Naive thymus-derived CD4-positive, alpha-beta T cell (primary cell): ENCODE measurements at regions of chr12 and their contacts with region 1.

Region 1: GRCh38 chr12:96906849-96907670 is at the start of gene NEDD1:
- DNase-seq: peak; percentile 70 to 89 (median 81)
- ATAC-seq: peak; percentile 90
- H3K4me3 ChIP-seq: peak within 1 kb of the TSS; percentile 84
- H3K4me3 Mint-ChIP-seq: peak within 1 kb of the TSS; percentile 89 to 97 (median 95)
- H3K27ac ChIP-seq: peak within 1 kb of the TSS; percentile 99
- H3K27ac Mint-ChIP-seq: peak within 1 kb of the TSS; percentile 96 to 99 (median 98)
- H3K4me1 ChIP-seq: peaks cover 0 to 12% of the 10 kb centered on the region in 2 donors
- H3K4me1 Mint-ChIP-seq: peaks cover 21 to 53% (median 47%) of the 10 kb centered on the region in 7 donors
- H3K27me3 ChIP-seq: no peaks in the 10 kb centered on the region
- H3K27me3 Mint-ChIP-seq: peaks cover 0 to 12% (median 0%) of the 10 kb centered on the region in 5 donors
- total RNA-seq, gene NEDD1: 18.3 to 52.4 (median 23.2) TPM

Region 2: GRCh38 chr12:95316798-95317197 is 1590.3 kb before region 1 on chr12:
- CTCF ChIA-PET with region 1: no interaction called
- POLR2A ChIA-PET with region 1: no interaction called
- intact Hi-C with region 1: no loop called
- DNase-seq: no peak
- ATAC-seq: no peak
- H3K4me3 ChIP-seq: no peak overlapping the region
- H3K4me3 Mint-ChIP-seq: no peak overlapping the region
- H3K27ac ChIP-seq: no peak overlapping the region
- H3K27ac Mint-ChIP-seq: no peak overlapping the region
- H3K4me1 ChIP-seq: no peaks in the 10 kb centered on the region
- H3K4me1 Mint-ChIP-seq: peaks cover 0 to 1% (median 0%) of the 10 kb centered on the region in 7 donors
- H3K27me3 ChIP-seq: peaks cover 0 to 2% of the 10 kb centered on the region in 2 donors
- H3K27me3 Mint-ChIP-seq: peaks cover 0 to 9% (median 5%) of the 10 kb centered on the region in 5 donors

Region 3: DNA sequence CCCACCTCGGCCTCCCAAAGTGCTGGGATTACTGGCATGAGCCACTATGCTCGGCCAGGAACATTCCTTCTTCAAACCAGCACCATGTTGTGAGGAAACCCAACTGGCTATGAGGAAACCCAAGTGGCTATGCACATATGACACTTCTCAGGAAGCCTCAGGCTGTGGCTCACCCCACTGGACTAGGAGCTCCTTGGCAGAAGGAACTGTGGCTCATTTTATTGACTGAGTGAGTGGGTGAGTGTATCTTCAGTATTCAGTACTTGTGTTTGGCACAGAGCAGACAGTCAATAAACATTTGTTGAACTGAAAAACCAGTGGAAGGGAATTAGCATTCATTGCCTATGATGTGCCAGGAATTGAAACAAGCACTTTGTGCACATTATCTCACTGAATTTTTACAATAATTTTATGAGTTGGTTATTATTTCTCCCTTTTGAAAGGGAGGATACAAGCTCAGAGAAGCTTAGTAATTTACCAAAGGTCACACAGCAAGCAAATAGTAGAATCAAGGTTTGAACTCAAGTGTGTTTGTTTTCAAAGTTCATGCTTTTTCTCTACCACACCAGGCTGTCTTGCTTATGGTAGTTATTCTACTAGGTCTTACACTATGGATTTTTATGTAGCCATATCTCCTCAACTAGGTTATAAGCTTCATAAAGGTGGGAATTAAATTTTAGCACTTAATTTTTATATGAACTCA is 1567.8 kb before region 1 on chr12:
- CTCF ChIA-PET with region 1: no interaction called
- POLR2A ChIA-PET with region 1: no interaction called
- intact Hi-C with region 1: no loop called
- DNase-seq: no peak
- ATAC-seq: no peak
- H3K4me3 ChIP-seq: no peak overlapping the region
- H3K4me3 Mint-ChIP-seq: no peak overlapping the region
- H3K27ac ChIP-seq: no peak overlapping the region
- H3K27ac Mint-ChIP-seq: no peak overlapping the region
- H3K4me1 ChIP-seq: no peaks in the 10 kb centered on the region
- H3K4me1 Mint-ChIP-seq: peaks cover 0 to 4% (median 4%) of the 10 kb centered on the region in 7 donors
- H3K27me3 ChIP-seq: no peaks in the 10 kb centered on the region
- H3K27me3 Mint-ChIP-seq: peaks cover 0 to 2% (median 0%) of the 10 kb centered on the region in 5 donors

Region 4: GRCh38 chr12:95858479-95859343 is 1048.3 kb before region 1 on chr12 and contains the start of gene SNRPF:
- CTCF ChIA-PET with region 1: no interaction called
- POLR2A ChIA-PET with region 1: no interaction called
- intact Hi-C with region 1: loop called (anchors 2 to 5 kb)
- DNase-seq: peak; percentile 88 to 96 (median 92)
- ATAC-seq: peak; percentile 98
- H3K4me3 ChIP-seq: peak within 1 kb of the TSS; percentile 82
- H3K4me3 Mint-ChIP-seq: no peak within 1 kb of the TSS
- H3K27ac ChIP-seq: peak within 1 kb of the TSS; percentile 86
- H3K27ac Mint-ChIP-seq: no peak within 1 kb of the TSS
- H3K4me1 ChIP-seq: peaks cover 11 to 12% of the 10 kb centered on the region in 2 donors
- H3K4me1 Mint-ChIP-seq: peaks cover 13 to 27% (median 16%) of the 10 kb centered on the region in 7 donors
- H3K27me3 ChIP-seq: no peaks in the 10 kb centered on the region
- H3K27me3 Mint-ChIP-seq: peaks cover 3 to 11% (median 7%) of the 10 kb centered on the region in 5 donors
- total RNA-seq, gene SNRPF: 19.0 to 40.4 (median 21.7) TPM

Region 5: GRCh38 chr12:96208801-96209549 is 698.1 kb before region 1 on chr12:
- CTCF ChIA-PET with region 1: no interaction called
- POLR2A ChIA-PET with region 1: no interaction called
- intact Hi-C with region 1: loop called in 1 of 2 experiments (anchors 5 kb)
- DNase-seq: no peak
- ATAC-seq: peak; percentile 15
- H3K4me3 ChIP-seq: no peak overlapping the region
- H3K4me3 Mint-ChIP-seq: peak overlapping the region; percentile 69 to 97 (median 85)
- H3K27ac ChIP-seq: peak overlapping the region; percentile 62
- H3K27ac Mint-ChIP-seq: peak overlapping the region; percentile 50 to 99 (median 96)
- H3K4me1 ChIP-seq: peaks cover 64 to 93% of the 10 kb centered on the region in 2 donors
- H3K4me1 Mint-ChIP-seq: peaks cover 70 to 100% (median 98%) of the 10 kb centered on the region in 7 donors
- H3K27me3 ChIP-seq: no peaks in the 10 kb centered on the region
- H3K27me3 Mint-ChIP-seq: no peaks in the 10 kb centered on the region

Region 6: GRCh38 chr12:96719660-96720363 is 187.2 kb before region 1 on chr12:
- CTCF ChIA-PET with region 1: no interaction called
- POLR2A ChIA-PET with region 1: interaction called, 3 read pairs
- intact Hi-C with region 1: loop called (anchors 1 to 2 kb)
- DNase-seq: peak in 6 of 9 donors; percentile 8 to 37 (median 26)
- ATAC-seq: peak; percentile 68
- H3K4me3 ChIP-seq: peak overlapping the region; percentile 81
- H3K4me3 Mint-ChIP-seq: peak overlapping the region; percentile 85 to 97 (median 93)
- H3K27ac ChIP-seq: peak overlapping the region; percentile 71
- H3K27ac Mint-ChIP-seq: peak overlapping the region; percentile 85 to 96 (median 91)
- H3K4me1 ChIP-seq: peaks cover 6 to 13% of the 10 kb centered on the region in 2 donors
- H3K4me1 Mint-ChIP-seq: peaks cover 0 to 19% (median 8%) of the 10 kb centered on the region in 7 donors
- H3K27me3 ChIP-seq: no peaks in the 10 kb centered on the region
- H3K27me3 Mint-ChIP-seq: no peaks in the 10 kb centered on the region

Region 7: DNA sequence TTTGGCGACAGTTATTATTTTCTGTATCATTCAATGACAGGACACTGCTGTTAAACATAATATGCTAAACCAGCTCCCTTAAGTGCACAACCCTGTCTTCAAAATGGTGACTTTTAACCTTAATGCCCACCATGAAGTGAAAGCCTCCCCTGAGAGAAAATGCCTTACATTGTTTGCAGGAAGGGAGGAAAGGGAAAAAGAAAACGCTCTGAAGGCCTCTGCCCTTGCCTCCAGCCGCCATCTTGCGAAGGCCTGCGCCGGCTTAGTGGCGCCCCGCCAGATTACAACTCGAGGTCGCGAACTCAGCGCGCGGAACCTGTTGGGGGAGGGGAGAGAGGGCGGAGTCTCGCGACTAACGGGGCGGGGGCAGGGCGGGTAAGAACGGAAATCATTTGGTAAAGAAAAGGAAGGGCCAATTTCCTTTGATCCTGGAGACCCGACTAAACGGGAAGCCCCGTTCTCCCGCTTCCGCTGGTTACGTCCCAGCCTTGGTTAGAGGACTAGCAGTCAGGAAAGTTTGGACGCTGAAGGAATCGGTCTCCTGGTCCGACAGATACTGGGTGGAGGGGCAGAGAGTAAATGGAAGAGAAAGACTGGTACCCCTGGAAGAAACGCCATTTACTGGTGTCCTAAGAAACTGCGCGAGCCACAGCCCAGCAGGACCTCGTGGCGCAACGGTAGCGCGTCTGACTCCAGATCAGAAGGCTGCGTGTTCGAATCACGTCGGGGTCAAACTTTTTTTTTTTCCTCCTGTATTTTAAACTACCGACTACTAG is 1596.7 kb after region 1 on chr12:
- CTCF ChIA-PET with region 1: no interaction called
- POLR2A ChIA-PET with region 1: no interaction called
- intact Hi-C with region 1: loop called (anchors 5 kb)
- DNase-seq: peak; percentile 89 to 95 (median 92)
- ATAC-seq: peak; percentile 94
- H3K4me3 ChIP-seq: peak overlapping the region; percentile 97
- H3K4me3 Mint-ChIP-seq: peak overlapping the region; percentile 89 to 99 (median 94)
- H3K27ac ChIP-seq: peak overlapping the region; percentile 90
- H3K27ac Mint-ChIP-seq: peak overlapping the region; percentile 95 to 100 (median 100)
- H3K4me1 ChIP-seq: peaks cover 0 to 11% of the 10 kb centered on the region in 2 donors
- H3K4me1 Mint-ChIP-seq: peaks cover 6 to 30% (median 23%) of the 10 kb centered on the region in 7 donors
- H3K27me3 ChIP-seq: no peaks in the 10 kb centered on the region
- H3K27me3 Mint-ChIP-seq: peaks cover 0 to 18% (median 3%) of the 10 kb centered on the region in 5 donors

Region 8: DNA sequence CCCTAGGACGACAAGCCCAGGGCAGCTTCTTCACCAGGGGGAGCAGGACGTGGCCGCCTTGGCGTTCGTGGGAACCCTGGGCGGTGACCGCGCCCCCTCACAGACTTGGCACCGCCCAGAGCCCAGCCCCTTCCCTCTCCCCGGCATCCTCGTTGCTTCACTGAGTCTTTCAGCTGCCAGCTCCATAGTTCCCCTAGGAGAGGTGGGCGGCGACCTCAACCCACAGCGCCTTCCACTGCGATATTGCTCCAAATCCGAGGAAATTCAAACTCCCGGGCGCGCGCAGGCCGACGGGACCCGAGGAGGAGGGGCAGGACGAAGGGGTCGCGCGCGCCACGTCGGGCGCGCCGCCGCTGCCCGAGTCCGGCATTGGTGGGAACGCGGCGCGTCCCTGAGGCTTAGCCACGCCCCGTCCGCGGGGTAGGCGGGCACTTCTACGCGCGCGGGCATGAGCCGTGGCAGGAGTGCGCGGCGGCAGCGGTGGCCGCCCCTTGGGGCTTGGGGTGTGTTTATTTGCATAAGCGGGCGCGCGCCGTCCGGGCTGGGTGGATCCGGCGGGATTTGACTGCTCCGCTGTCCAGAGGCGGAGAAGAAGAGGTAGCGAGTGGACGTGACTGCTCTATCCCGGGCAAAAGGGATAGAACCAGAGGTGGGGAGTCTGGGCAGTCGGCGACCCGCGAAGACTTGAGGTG is 1737.8 kb after region 1 on chr12 and contains the starts of genes APAF1 and IKBIP:
- CTCF ChIA-PET with region 1: no interaction called
- POLR2A ChIA-PET with region 1: no interaction called
- intact Hi-C with region 1: loop called (anchors 1 to 2 kb)
- DNase-seq: peak; percentile 92 to 98 (median 96)
- ATAC-seq: peak; percentile 96
- H3K4me3 ChIP-seq: peak within 1 kb of the TSS; percentile 72
- H3K4me3 Mint-ChIP-seq: peak within 1 kb of the TSS; percentile 94 to 100 (median 98)
- H3K27ac ChIP-seq: peak within 1 kb of the TSS; percentile 76
- H3K27ac Mint-ChIP-seq: peak within 1 kb of the TSS; percentile 84 to 97 (median 93)
- H3K4me1 ChIP-seq: peaks cover 0 to 8% of the 10 kb centered on the region in 2 donors
- H3K4me1 Mint-ChIP-seq: peaks cover 7 to 40% (median 27%) of the 10 kb centered on the region in 7 donors
- H3K27me3 ChIP-seq: no peaks in the 10 kb centered on the region
- H3K27me3 Mint-ChIP-seq: no peaks in the 10 kb centered on the region
- total RNA-seq, gene APAF1: 22.8 to 36.4 (median 28.6) TPM
- total RNA-seq, gene IKBIP: 2.3 to 24.6 (median 6.1) TPM